Ascending aorta (tissue), 2 donors: ENCODE measurements at regions of chr18 and their contacts with region 1.

Region 1: GRCh38 chr18:36451454-36452251 is 154.1 kb downstream of the FHOD3 start:
- DNase-seq: no peak
- H3K4me3 ChIP-seq: no peak overlapping the region
- H3K27ac ChIP-seq: no peak overlapping the region
- H3K4me1 ChIP-seq: peaks cover 4 to 20% of the 10 kb centered on the region in 2 donors
- H3K27me3 ChIP-seq: no peaks in the 10 kb centered on the region
- CTCF ChIP-seq: no peak

Region 2: DNA sequence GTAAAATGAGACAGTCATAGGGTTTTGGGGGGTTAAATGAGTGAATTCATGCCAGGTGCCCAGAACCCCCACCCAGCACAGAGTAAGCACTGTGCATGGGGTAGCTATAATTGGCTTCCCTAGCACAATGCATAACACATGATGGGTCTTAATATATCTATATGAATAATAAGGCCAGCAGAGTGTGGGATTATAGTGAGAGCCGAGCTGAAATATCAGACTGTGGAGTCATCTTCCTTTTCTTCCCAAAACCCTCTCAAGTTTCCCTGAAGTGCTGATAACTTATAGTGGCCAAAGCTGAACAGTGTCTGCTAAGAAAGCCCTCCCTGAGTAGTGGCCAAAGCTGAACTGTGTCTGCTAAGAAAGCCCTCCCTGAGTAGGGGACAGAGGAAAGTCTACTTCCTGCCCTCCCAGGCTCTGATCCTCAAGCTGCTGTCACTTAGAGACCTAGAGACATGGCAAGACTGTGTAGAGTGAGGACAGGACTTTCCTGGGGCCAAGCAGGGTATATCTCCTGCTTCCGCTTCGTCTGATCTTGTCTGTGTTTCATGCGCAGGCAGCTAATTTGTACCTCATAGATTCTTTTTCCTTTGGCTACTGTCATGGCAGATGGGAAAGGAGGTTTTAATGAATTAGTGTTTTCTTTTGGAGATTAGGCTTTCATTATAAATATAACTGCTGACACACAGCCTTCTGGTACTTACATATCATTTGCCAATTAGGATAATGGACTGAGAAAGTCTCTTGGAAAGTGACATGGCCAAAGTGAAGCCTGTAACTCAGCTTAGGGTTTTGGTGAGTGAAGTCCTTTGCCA is 59.3 kb before region 1 on chr18:
- intact Hi-C with region 1: no loop called
- DNase-seq: peak in 1 of 2 donors; percentile 39
- H3K4me3 ChIP-seq: no peak overlapping the region
- H3K27ac ChIP-seq: peak overlapping the region; percentile 73 to 74
- H3K4me1 ChIP-seq: peaks cover 0 to 19% of the 10 kb centered on the region in 2 donors
- H3K27me3 ChIP-seq: no peaks in the 10 kb centered on the region
- CTCF ChIP-seq: no peak

Region 3: GRCh38 chr18:36499938-36500337 is 48.3 kb after region 1 on chr18:
- intact Hi-C with region 1: loop called (anchors 1 kb)
- DNase-seq: no peak
- H3K4me3 ChIP-seq: no peak overlapping the region
- H3K27ac ChIP-seq: no peak overlapping the region
- H3K4me1 ChIP-seq: no peaks in the 10 kb centered on the region
- H3K27me3 ChIP-seq: no peaks in the 10 kb centered on the region
- CTCF ChIP-seq: no peak